CD8-positive, alpha-beta T cell (primary cell): ENCODE measurements at regions of chrX and their contacts with region 1.

Region 1: GRCh38 chrX:77910108-77910840 is at the start of gene ATP7A:
- DNase-seq: peak; percentile 79 to 96 (median 89)
- ATAC-seq: peak; percentile 91
- H3K4me3 ChIP-seq: peak within 1 kb of the TSS; percentile 59 to 82
- H3K4me3 Mint-ChIP-seq: peak within 1 kb of the TSS; percentile 94
- H3K27ac ChIP-seq: peak within 1 kb of the TSS; percentile 80 to 85
- H3K27ac Mint-ChIP-seq: peak within 1 kb of the TSS; percentile 98
- H3K4me1 ChIP-seq: peaks cover 15% of the 10 kb centered on the region
- H3K4me1 Mint-ChIP-seq: peaks cover 21% of the 10 kb centered on the region
- H3K27me3 ChIP-seq: no peaks in the 10 kb centered on the region
- H3K27me3 Mint-ChIP-seq: no peaks in the 10 kb centered on the region
- CTCF ChIP-seq: peak; percentile 41
- total RNA-seq, gene ATP7A: 14.3 to 15.3 TPM

Region 2: DNA sequence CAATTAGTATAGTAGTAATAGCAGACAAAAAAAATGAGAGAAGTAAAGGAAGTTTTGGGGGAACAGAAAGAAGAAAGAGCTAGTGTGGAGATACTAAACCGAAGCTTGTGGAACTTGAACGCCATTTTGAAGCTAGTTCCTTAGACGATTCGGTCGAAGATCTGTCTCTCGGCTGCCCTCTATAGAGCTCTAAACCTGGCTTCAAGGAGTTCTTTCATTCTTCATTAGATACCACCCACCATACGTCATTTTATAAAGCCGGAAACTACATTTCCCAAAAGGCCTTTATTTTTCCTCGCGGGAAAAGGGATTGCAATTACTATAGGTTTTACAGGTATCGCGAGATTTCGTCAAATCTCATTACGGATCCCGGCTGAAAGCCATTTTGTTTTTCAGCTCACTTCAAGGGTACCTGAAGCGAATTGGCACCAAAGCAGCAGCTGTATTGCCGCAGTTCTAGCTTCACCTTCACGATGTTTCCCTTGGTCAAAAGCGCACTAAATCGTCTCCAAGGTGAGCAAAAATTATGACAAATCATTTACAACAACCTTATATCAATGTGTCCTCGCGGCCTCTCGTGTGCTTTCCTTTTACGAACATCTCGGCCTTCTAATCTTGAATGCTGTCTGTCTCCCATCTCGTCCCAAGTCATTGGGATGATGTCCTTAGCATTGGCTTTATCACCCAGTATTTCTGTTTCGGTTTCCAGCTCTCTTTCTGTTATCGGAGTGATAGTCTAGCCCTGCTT is 11.0 kb before region 1 on chrX and contains the start of gene COX7B:
- CTCF ChIA-PET with region 1: interaction called, 17 read pairs
- POLR2A ChIA-PET with region 1: interaction called, 25 read pairs
- intact Hi-C with region 1: loop called (anchors 1 kb)
- DNase-seq: peak; percentile 30 to 94 (median 58)
- ATAC-seq: peak; percentile 64
- H3K4me3 ChIP-seq: peak within 1 kb of the TSS; percentile 64 to 87
- H3K4me3 Mint-ChIP-seq: peak within 1 kb of the TSS; percentile 86
- H3K27ac ChIP-seq: peak within 1 kb of the TSS; percentile 88 to 94
- H3K27ac Mint-ChIP-seq: peak within 1 kb of the TSS; percentile 94
- H3K4me1 ChIP-seq: peaks cover 24% of the 10 kb centered on the region
- H3K4me1 Mint-ChIP-seq: peaks cover 26% of the 10 kb centered on the region
- H3K27me3 ChIP-seq: no peaks in the 10 kb centered on the region
- H3K27me3 Mint-ChIP-seq: no peaks in the 10 kb centered on the region
- CTCF ChIP-seq: peak; percentile 22
- total RNA-seq, gene COX7B: 127 to 134 TPM

Region 3: GRCh38 chrX:78024349-78025108 is 114.3 kb after region 1 on chrX:
- CTCF ChIA-PET with region 1: interaction called, 28 read pairs
- POLR2A ChIA-PET with region 1: interaction called, 4 read pairs
- intact Hi-C with region 1: loop called (anchors 1 kb)
- DNase-seq: peak in 6 of 9 experiments; percentile 11 to 67 (median 43)
- ATAC-seq: peak; percentile 88
- H3K4me3 ChIP-seq: no peak overlapping the region
- H3K4me3 Mint-ChIP-seq: no peak overlapping the region
- H3K27ac ChIP-seq: no peak overlapping the region
- H3K27ac Mint-ChIP-seq: no peak overlapping the region
- H3K4me1 ChIP-seq: no peaks in the 10 kb centered on the region
- H3K4me1 Mint-ChIP-seq: peaks cover 5% of the 10 kb centered on the region
- H3K27me3 ChIP-seq: no peaks in the 10 kb centered on the region
- H3K27me3 Mint-ChIP-seq: no peaks in the 10 kb centered on the region
- CTCF ChIP-seq: peak; percentile 47

Region 4: GRCh38 chrX:78103623-78104446 is 193.6 kb after region 1 on chrX and contains the start of gene PGK1:
- CTCF ChIA-PET with region 1: no interaction called
- POLR2A ChIA-PET with region 1: no interaction called
- intact Hi-C with region 1: loop called (anchors 1 kb)
- DNase-seq: peak; percentile 85 to 97 (median 90)
- ATAC-seq: peak; percentile 93
- H3K4me3 ChIP-seq: peak within 1 kb of the TSS; percentile 95 to 99
- H3K4me3 Mint-ChIP-seq: peak within 1 kb of the TSS; percentile 94
- H3K27ac ChIP-seq: peak within 1 kb of the TSS; percentile 98
- H3K27ac Mint-ChIP-seq: peak within 1 kb of the TSS; percentile 96
- H3K4me1 ChIP-seq: peaks cover 47% of the 10 kb centered on the region
- H3K4me1 Mint-ChIP-seq: peaks cover 46% of the 10 kb centered on the region
- H3K27me3 ChIP-seq: no peaks in the 10 kb centered on the region
- H3K27me3 Mint-ChIP-seq: no peaks in the 10 kb centered on the region
- CTCF ChIP-seq: no peak
- total RNA-seq, gene PGK1: 364 to 374 TPM